ENCODE measurements at regions of chrX and their contacts with region 1.

Region 1: DNA sequence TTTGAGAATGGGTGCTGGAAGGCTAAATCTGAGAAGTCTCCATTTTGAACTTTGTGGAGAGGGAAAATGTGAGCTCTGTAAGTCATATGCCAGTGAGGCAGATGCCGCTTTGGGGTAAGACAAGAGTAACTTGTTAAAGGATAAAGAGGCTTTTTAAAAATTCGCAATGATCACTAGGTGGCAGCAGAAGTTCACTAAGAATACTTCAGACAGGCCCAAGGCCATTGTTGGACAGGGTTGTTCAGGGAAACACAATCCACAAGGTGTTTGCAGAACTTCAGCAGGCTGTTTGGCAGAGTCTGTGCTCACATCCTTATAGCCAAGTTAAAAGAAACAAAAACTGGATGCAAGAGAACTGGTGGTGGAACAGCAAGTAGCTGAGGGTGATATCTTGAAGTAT is 13.7 kb upstream of the PIGA start:
- DNase-seq: no peak
- H3K4me3 ChIP-seq: no peak overlapping the region
- CTCF ChIP-seq: peak; percentile 20

Region 2: DNA sequence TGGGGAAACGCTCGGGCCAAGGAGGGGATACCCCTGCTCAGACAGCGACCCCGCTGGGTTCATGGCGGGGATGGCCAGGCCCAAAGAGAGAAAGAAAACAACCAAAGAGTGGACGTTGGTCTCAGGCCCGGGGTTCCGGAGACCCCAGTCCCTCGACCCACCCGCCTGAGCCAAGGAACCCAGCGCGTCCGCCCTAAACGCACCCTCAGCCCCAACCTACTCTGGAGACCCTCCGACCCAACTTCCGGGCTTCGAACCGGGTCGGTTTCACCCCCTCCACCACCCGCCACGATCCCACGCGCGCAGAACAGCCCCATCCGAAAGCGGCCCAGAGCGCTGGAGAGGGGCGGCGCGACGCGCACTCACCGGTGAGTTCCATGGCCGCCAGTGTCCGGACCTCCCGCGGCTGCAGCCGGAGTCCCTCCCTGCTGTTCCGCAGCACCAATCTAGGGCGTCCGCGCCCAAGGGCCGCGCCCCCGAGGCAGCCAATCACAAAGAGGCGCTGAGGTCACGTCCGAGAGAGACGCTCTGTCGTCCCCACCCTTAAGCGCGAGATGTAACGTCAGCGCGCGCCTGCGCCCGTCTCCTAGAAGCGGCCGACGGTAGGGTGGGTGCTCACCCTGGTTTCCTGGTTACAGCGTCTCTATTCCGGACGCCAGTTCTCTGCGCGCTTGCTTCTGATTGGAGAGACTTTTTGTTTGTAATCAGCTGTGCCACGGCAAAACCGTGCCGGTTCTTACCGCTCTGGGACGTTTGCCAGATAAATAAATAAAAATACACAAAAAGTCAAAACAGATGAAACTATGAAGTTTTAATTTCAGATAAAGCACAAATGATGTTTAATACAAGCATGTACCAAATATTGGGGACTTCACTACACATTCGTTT is 13.7 kb before region 1 on chrX and contains the start of gene PIGA:
- CTCF ChIA-PET with region 1: interaction called, 12 read pairs
- POLR2A ChIA-PET with region 1: no interaction called
- DNase-seq: peak; percentile 74
- H3K4me3 ChIP-seq: peak within 1 kb of the TSS; percentile 74
- CTCF ChIP-seq: no peak

Region 3: DNA sequence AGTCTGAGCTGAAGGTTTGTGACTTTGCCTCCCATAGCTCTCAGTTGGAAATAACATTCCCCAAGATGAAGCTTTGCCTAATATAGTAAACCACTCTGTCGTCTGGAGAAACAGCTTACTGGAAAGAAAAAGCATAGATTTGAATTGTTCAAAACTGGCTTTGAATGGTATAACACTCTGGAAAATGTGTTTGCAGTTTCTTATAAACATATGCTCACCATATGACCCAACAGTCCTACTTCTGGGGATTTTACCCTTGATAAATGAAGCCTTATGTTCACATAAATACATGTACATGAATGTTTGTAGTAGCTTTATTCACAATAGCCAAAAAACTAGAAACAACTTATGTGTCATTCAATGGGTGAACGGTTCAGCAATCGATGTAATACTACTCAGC is 24.9 kb after region 1 on chrX:
- CTCF ChIA-PET with region 1: interaction called, 11 read pairs
- POLR2A ChIA-PET with region 1: no interaction called
- DNase-seq: no peak
- H3K4me3 ChIP-seq: no peak overlapping the region
- CTCF ChIP-seq: no peak

Region 4: DNA sequence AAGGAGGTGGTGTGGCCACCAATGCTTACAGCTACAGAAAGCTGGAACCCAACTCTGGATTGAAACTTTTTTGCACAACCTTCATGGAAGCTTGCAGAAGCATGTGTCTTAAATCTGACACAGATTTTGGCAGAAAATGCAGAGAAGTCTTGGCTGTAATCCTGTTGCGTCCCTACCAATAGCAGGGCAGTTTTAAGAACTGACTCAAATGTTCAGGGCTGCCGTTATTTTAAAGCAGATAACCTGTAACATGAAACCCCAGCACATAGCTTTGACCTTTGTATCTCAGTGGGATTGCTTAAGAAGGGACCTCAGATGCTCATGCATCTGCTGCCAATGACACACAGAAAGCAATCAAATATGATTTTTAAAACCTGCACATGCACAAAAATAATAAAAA is 35.3 kb after region 1 on chrX and contains the start of gene VEGFD:
- CTCF ChIA-PET with region 1: interaction called, 10 read pairs
- POLR2A ChIA-PET with region 1: no interaction called
- DNase-seq: peak; percentile 12
- H3K4me3 ChIP-seq: no peak within 1 kb of the TSS
- CTCF ChIP-seq: no peak

Region 5: DNA sequence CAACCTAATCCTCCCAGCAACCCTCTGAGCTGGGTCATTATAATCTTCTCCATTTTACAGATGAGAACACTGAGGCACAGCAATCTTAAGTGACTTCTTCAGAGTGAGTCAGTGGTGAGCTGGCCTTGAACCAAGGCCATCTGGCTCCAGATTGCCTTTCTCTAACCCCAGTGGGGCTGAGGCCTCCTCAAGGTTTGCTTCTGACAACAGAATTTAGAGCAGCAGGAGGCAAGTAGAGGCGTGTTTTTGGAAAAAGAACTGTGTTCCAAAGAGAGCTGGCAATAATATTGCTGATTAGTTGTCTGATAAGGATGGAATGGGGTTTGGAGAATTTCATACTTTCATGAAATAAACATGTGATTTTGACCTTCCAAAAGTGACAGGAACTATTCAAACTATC is 102.9 kb after region 1 on chrX:
- CTCF ChIA-PET with region 1: interaction called, 20 read pairs
- POLR2A ChIA-PET with region 1: no interaction called
- DNase-seq: no peak
- H3K4me3 ChIP-seq: no peak overlapping the region
- CTCF ChIP-seq: no peak

Region 6: DNA sequence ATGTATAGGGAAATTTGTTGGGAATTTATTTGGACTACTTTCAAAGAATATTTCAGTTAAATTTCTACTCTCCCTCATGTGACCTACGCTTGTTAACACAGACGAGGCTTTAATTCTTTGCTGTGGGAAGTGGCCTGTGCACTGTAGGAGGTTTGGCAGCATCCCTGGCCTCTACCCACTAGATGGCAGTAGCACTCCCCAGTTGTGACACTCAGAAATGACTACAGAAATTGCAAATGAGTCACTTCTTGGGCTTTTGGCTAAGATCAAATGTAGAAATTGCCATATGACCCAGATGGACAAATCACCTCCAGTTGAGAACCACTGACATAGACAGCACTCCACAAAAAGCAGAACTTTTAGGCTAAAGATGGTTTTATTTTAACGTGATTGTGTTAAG is 122.0 kb after region 1 on chrX:
- CTCF ChIA-PET with region 1: interaction called, 309 read pairs
- POLR2A ChIA-PET with region 1: no interaction called
- DNase-seq: no peak
- H3K4me3 ChIP-seq: no peak overlapping the region
- CTCF ChIP-seq: peak; percentile 67

Region 7: DNA sequence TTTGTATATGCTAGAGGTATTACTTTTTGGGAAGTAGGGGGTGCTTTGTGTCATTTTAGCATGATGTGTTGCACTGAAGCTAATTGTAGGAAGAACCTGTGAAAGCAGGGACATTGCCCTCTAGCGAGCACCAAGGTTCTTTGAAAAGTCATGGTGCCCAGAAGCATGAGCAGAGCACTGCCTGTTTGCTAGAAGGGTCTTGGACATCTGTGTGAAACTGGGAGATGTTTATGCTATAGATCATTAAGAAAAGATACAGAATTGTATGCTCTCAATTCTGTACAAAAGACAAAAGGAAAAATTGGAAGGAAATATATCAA is 789.0 kb after region 1 on chrX:
- CTCF ChIA-PET with region 1: no interaction called
- POLR2A ChIA-PET with region 1: no interaction called
- DNase-seq: no peak
- H3K4me3 ChIP-seq: no peak overlapping the region
- CTCF ChIP-seq: no peak